ENCODE measurements at regions of chr11 and their contacts with region 1.

Region 1: GRCh38 chr11:35391922-35392813 is 27.2 kb downstream of the SLC1A2 start:
- DNase-seq: peak; percentile 92
- ATAC-seq: peak; percentile 92
- H3K4me3 ChIP-seq: peak overlapping the region; percentile 27
- H3K27ac ChIP-seq: no peak overlapping the region
- H3K4me1 ChIP-seq: peaks cover 17% of the 10 kb centered on the region
- H3K27me3 ChIP-seq: no peaks in the 10 kb centered on the region
- CTCF ChIP-seq: peak; percentile 84

Region 2: DNA sequence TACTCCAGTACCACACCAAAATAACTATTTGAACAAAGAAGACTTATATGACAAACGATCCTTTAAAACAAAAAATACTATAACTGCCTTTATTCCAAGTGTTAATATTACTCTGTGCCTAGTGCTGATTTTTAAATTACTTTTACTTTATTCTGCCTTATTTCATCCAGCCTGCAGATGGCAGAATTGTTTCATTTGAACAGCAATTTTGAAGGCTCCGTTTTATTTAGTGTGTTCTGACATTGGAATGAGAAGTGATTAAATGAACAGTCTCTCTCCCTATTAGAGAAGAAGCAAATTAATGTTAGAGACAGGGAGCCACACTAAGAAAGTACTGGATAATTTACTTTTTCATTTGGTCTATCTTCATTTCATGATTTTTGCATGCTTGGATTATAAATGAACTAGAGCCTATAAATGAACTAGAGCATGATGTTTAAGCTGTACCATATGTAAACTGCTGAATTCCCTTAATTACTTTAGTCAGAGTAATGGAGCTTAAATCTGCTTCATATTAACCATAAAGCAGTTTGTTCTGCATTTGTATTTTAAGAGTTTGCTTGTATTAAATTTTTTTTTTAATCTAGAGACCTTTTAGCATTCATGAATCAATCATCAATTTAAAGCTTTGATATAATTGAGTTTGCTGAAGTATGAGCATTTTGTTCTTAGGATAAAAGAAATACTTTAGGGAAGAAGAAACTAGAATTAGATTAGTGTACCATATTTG is 465.9 kb before region 1 on chr11:
- intact Hi-C with region 1: loop called (anchors 5 kb)
- DNase-seq: no peak
- ATAC-seq: peak; percentile 81
- H3K4me3 ChIP-seq: no peak overlapping the region
- H3K27ac ChIP-seq: no peak overlapping the region
- H3K4me1 ChIP-seq: peaks cover 31% of the 10 kb centered on the region
- H3K27me3 ChIP-seq: no peaks in the 10 kb centered on the region
- CTCF ChIP-seq: peak; percentile 70